Heart right ventricle (tissue), 16 donors: ENCODE measurements at regions of chr16 and their contacts with region 1.

Region 1: GRCh38 chr16:18853694-18854093 is 52.3 kb upstream of the ARL6IP1 start:
- DNase-seq: no peak
- ATAC-seq: no peak
- H3K4me3 ChIP-seq: no peak overlapping the region
- H3K27ac ChIP-seq: no peak overlapping the region
- H3K4me1 ChIP-seq: no peaks in the 10 kb centered on the region
- H3K27me3 ChIP-seq: no peaks in the 10 kb centered on the region
- CTCF ChIP-seq: no peak

Region 2: DNA sequence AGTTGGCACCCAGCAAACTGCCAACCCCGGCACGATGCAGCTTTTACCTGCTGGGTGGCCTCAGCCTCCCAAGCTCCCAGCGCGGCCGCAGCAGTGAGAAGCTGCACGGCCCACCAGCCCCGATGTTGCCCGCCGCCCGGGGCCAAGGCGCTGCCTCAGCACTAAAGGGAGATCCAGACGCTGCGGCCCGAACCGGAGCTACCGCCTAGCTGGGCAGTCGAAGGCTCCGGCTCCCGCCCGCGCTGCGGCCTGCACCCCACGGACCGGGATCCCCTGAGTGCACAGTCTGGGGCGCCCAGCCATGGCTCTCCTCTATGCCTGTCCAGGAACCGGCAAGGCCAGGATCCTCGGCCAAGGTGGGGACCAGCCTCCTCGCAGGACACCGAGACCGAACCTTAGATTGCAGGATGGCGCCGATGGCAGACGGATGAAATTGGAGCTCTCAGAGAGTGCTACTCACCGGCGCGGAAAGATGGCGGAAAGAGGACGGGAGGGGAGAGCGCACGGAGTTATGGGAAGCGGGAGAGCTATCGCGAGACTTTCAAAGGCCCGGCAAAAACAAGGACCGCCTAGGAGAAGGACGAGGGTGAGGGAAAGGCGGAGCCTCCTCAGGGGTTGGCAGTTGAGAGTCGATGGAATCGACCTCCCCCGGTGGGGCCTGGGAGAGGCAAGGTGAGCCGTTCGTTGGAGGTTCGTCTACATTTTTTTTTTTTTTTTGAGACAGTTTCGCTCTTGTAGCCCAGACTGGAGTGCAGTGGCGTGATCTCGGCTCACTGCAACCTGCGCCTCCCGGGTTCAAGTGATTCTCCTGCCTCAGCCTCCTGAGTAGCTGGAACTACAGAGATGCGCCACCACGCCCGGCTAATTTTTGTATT is 63.6 kb before region 1 on chr16 and contains the start of gene RPS15A:
- intact Hi-C with region 1: no loop called
- DNase-seq: peak; percentile 88 to 97
- ATAC-seq: peak; percentile 98 to 100 (median 100)
- H3K4me3 ChIP-seq: peak within 1 kb of the TSS; percentile 73 to 97 (median 88)
- H3K27ac ChIP-seq: peak within 1 kb of the TSS in 9 of 10 donors; percentile 73 to 91 (median 84)
- H3K4me1 ChIP-seq: peaks cover 0 to 47% (median 41%) of the 10 kb centered on the region in 9 donors
- H3K27me3 ChIP-seq: no peaks in the 10 kb centered on the region
- CTCF ChIP-seq: peak in 1 of 9 donors; percentile 6
- total RNA-seq, gene RPS15A: 613 to 968 (median 724) TPM

Region 3: GRCh38 chr16:18816286-18816685 is 37.4 kb before region 1 on chr16:
- intact Hi-C with region 1: loop called in 2 of 10 experiments (anchors 5 kb)
- DNase-seq: no peak
- ATAC-seq: no peak
- H3K4me3 ChIP-seq: no peak overlapping the region
- H3K27ac ChIP-seq: no peak overlapping the region
- H3K4me1 ChIP-seq: peaks cover 0 to 8% (median 0%) of the 10 kb centered on the region in 9 donors
- H3K27me3 ChIP-seq: no peaks in the 10 kb centered on the region
- CTCF ChIP-seq: no peak

Region 4: DNA sequence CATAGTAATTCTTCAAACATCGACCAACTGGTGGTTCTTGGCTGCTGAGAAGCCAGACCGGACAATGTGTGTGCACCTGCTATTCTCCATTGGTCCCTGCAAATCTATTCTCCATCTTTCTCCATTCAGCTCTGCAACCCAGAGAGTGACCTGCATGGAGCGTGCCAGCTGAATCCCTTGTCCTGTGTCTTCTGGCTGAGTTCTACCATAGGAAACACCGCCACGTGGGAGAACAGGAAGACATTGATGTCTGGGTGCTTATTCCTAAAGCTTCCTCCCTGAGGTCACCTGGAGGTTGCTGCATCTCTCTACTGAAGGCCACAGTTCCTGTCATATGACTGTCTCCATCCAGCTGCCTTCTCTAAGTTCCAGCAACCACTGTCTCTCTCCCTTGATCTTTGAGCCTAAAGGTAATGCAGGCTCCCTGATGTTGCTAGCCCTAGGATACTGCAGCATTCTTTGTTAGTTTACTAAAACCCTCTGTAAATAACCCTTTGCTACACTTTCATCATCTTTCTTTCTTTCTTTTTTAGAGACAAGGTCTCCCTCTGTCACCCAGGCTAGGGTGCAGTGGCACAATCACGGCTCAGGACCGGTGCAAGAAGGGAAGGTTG is 83.1 kb after region 1 on chr16:
- intact Hi-C with region 1: no loop called
- DNase-seq: no peak
- ATAC-seq: no peak
- H3K4me3 ChIP-seq: no peak overlapping the region
- H3K27ac ChIP-seq: no peak overlapping the region
- H3K4me1 ChIP-seq: peaks cover 0 to 12% (median 3%) of the 10 kb centered on the region in 9 donors
- H3K27me3 ChIP-seq: no peaks in the 10 kb centered on the region
- CTCF ChIP-seq: no peak

Region 5: DNA sequence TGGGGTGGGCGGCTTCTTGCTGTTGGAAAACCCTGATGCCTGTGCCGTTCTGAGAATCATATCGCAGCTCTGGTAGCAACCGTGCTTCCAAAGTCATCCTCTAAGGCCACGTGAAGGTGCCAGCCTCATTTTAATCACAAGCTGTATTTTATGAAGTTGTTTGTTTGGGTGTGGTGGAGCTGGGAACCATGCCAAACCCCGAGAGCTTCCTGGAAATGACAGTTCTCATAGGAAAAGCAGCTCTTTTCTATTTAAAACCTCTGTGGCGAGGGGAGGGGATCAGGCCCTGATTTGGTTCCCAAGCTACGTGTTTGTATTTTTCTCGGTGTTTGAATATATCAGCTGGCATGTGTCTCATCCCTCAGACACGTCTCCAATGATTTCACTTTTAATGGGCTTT is 842.6 kb after region 1 on chr16:
- intact Hi-C with region 1: no loop called
- DNase-seq: peak; percentile 71 to 92
- ATAC-seq: peak; percentile 56 to 78 (median 68)
- H3K4me3 ChIP-seq: peak overlapping the region in 1 of 10 donors; percentile 7
- H3K27ac ChIP-seq: peak overlapping the region; percentile 69 to 93 (median 84)
- H3K4me1 ChIP-seq: peaks cover 8 to 64% (median 55%) of the 10 kb centered on the region in 9 donors
- H3K27me3 ChIP-seq: no peaks in the 10 kb centered on the region
- CTCF ChIP-seq: no peak